ENCODE measurements at regions of chr16 and their contacts with region 1.

Region 1: GRCh38 chr16:46973207-46973995 is at the start of gene DNAJA2:
- DNase-seq: peak; percentile 96
- ATAC-seq: peak; percentile 87
- H3K4me3 Mint-ChIP-seq: peak within 1 kb of the TSS; percentile 85
- H3K27ac Mint-ChIP-seq: peak within 1 kb of the TSS; percentile 99
- H3K4me1 Mint-ChIP-seq: peaks cover 56% of the 10 kb centered on the region
- H3K27me3 Mint-ChIP-seq: no peaks in the 10 kb centered on the region
- total RNA-seq, gene DNAJA2: 57.2 to 71.2 TPM

Region 2: DNA sequence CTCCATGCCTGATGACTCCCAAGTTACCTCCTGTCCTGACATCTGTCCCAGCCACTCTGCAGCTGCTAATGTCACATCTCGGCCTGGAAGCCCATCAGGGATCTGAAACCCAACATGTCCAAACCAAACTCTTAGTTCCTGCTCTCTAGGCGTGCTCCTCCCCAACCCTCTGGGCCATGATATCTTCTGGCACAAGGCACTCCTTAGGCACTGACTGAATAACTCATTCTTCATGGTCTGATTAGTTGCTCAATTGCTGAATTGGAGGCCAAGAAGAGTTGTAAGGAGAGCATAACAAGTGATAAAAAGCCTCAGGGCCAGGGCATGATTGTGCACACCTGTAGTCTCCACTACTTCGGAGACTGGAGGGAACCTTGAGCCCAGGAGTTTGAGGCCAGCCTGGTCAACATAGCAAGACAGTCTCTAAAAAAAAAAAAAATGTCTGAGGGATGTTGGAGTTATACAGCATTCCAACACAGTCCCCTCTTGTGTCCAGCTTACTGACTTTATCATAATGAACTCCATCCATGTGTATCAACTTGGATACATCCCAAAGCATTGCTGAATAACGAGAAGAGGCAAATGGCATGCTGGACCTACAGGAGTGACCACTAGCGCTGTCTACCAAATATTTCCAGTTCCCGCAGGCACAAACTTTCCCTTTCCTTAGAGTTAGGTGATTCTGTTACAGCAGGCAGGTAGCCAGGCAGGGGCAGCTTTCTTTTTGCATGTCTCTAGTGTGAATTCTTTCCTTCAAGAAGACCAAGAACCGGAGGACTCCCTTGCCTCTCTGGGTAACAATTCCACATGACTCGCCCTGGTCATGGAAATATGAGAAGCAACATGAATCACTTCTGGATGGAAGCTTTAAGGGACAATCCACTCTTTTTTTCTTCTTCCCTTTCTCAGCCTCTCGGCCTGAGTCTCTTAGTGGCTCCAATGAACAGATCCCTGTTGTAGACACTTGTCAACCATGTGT is 334.2 kb before region 1 on chr16:
- CTCF ChIA-PET with region 1: no interaction called
- POLR2A ChIA-PET with region 1: no interaction called
- intact Hi-C with region 1: no loop called
- DNase-seq: no peak
- ATAC-seq: no peak
- H3K4me3 Mint-ChIP-seq: no peak overlapping the region
- H3K27ac Mint-ChIP-seq: no peak overlapping the region
- H3K4me1 Mint-ChIP-seq: no peaks in the 10 kb centered on the region
- H3K27me3 Mint-ChIP-seq: no peaks in the 10 kb centered on the region

Region 3: DNA sequence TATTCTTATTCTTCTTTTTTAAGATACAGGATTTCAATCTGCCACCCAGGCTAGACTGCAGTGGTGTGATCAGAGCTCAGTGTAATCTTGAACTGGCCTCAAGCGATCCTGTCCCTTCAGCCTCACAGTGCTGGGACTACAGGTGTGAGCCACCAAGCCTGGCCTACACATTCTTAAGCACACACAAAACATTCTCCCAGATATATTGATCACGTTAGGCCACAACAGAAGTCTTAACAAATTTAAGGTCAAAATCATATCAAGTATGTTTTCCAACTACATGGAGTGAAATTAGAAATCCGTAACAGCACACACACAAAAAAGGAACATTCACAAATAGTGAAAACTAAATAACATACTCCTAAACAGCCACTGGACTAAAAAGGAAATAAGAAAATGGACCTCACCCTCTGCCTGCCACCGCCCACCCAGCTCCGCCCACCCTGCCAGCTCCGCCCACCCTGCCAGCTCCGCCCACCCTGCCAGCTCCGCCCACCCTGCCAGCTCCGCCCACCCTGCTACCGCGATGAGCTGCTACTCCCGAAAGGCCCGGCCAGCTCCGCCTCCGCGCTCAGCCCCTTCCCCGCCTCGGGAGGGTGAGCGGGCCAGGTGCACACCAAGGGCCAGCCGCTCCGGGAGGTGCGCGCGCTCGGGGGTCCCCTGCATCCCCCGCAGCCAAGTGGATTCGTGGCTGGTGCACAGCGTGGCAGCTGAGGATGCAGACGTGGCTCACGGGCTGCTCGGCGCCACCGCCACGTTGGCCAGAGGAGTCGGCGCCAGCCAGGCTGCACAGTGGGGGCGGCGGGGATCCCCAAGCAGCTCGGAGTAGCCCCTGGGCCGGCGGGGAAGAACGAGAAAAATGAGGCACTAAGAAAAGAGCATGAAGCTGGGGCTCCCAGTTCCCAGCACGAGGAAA is 183.6 kb before region 1 on chr16:
- CTCF ChIA-PET with region 1: no interaction called
- POLR2A ChIA-PET with region 1: no interaction called
- intact Hi-C with region 1: loop called in 1 of 2 experiments (anchors 2 kb)
- DNase-seq: peak; percentile 89
- ATAC-seq: peak; percentile 98
- H3K4me3 Mint-ChIP-seq: peak overlapping the region; percentile 69
- H3K27ac Mint-ChIP-seq: peak overlapping the region; percentile 60
- H3K4me1 Mint-ChIP-seq: peaks cover 26% of the 10 kb centered on the region
- H3K27me3 Mint-ChIP-seq: no peaks in the 10 kb centered on the region

Region 4: GRCh38 chr16:46947900-46948547 is 25.4 kb before region 1 on chr16:
- CTCF ChIA-PET with region 1: interaction called, 5 read pairs
- POLR2A ChIA-PET with region 1: no interaction called
- intact Hi-C with region 1: loop called in 1 of 2 experiments (anchors 2 kb)
- DNase-seq: peak; percentile 56
- ATAC-seq: peak; percentile 64
- H3K4me3 Mint-ChIP-seq: no peak overlapping the region
- H3K27ac Mint-ChIP-seq: peak overlapping the region; percentile 70
- H3K4me1 Mint-ChIP-seq: peaks cover 22% of the 10 kb centered on the region
- H3K27me3 Mint-ChIP-seq: no peaks in the 10 kb centered on the region

Region 5: GRCh38 chr16:47037746-47038458 is 64.5 kb after region 1 on chr16:
- CTCF ChIA-PET with region 1: interaction called, 13 read pairs
- POLR2A ChIA-PET with region 1: interaction called, 3 read pairs
- intact Hi-C with region 1: loop called (anchors 1 to 2 kb)
- DNase-seq: peak; percentile 94
- ATAC-seq: peak; percentile 98
- H3K4me3 Mint-ChIP-seq: peak overlapping the region; percentile 65
- H3K27ac Mint-ChIP-seq: no peak overlapping the region
- H3K4me1 Mint-ChIP-seq: peaks cover 2% of the 10 kb centered on the region
- H3K27me3 Mint-ChIP-seq: peaks cover 8% of the 10 kb centered on the region

Region 6: DNA sequence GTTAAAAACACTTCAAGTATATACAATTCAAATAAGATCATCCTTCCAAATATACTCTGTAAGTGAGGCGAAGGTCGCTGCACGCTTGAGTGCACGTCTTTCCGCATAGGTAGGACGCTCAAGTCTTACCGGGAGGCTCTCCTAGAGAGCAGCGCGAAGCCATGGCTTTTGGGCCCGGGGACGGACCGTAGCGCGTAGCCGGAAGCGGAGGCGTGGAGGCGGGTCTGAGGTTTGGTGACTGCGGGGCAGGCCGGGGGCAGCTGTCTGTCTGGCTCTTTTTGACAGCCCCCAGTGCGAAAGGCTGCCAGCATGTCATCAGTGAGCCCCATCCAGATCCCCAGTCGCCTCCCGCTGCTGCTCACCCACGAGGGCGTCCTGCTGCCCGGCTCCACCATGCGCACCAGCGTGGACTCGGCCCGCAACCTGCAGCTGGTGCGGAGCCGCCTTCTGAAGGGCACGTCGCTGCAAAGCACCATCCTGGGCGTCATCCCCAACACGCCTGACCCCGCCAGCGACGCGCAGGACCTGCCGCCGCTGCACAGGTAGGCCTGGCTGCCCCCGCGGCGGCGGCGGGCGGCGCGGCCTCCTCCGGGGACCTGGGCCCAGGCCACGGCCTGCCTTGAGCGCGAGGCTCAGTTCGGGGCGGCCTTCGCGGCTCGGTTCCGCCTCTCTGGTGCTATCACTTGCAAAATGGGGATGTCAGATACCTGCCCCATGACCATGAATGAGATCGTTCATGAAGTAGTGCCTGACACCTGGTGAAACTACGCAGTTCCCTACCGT is 1270.9 kb after region 1 on chr16 and contains the start of gene LONP2:
- CTCF ChIA-PET with region 1: no interaction called
- POLR2A ChIA-PET with region 1: no interaction called
- intact Hi-C with region 1: loop called in 1 of 2 experiments (anchors 2 kb)
- DNase-seq: peak; percentile 95
- ATAC-seq: peak; percentile 94
- H3K4me3 Mint-ChIP-seq: peak within 1 kb of the TSS; percentile 91
- H3K27ac Mint-ChIP-seq: peak within 1 kb of the TSS; percentile 88
- H3K4me1 Mint-ChIP-seq: peaks cover 36% of the 10 kb centered on the region
- H3K27me3 Mint-ChIP-seq: no peaks in the 10 kb centered on the region
- total RNA-seq, gene LONP2: 60.3 to 63.2 TPM